ENCODE measurements at regions of chr9 and their contacts with region 1.

Region 1: GRCh38 chr9:123401879-123402513 is 46.0 kb downstream of the CRB2 start:
- DNase-seq: peak; percentile 66
- ATAC-seq: peak; percentile 77
- H3K4me3 Mint-ChIP-seq: no peak overlapping the region
- H3K27ac Mint-ChIP-seq: peak overlapping the region; percentile 30; the same call in 1 of the 2 replicates
- H3K4me1 Mint-ChIP-seq: peaks cover 9% of the 10 kb centered on the region
- H3K27me3 Mint-ChIP-seq: no peaks in the 10 kb centered on the region
- CTCF ChIP-seq: peak; percentile 56

Region 2: DNA sequence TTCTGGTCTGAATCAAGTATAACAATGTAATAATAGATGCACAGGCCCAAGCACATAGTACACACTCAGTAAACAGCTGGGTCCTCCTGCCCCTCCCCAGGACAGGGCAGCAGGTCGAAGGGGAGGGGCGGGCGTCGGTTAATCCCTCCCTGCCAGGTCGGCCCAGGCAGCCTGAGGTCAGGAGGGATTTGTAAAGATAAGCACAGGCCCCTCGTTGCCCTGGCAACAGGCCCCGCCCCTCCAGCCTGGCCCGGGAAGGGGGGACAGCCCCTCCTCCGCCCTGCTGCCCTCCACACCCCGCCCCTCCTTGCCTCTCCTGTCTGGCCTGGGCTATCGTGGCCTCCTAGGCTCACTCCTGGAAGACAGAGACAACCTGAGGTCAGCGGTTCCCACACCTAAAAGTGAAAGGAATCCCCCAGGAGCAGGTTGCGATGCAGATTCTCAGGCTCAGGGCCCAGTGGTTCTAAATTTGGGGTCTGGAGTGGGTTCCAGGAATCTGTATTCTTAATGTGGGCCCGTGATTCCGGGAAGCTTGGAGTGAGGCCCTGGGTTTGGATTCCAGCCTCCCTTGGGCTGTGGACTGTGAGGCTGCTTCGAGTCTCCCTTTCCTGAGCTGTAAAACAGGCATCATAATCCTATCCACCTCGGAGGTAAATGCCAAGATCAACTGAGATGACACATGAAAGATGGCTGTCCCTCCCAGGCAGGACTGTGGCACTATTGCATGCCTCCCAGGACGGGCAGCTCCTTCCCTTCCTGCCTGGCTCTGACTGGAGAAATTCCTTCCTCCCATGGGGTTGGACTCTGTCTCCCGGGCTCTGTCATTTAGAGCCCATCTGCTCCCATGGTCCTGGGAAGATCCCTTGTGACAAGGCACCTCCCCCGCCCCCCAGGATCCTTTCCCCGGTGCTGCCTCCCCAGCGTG is 41.6 kb before region 1 on chr9:
- CTCF ChIA-PET with region 1: interaction called, 13 read pairs
- POLR2A ChIA-PET with region 1: no interaction called
- DNase-seq: peak; percentile 98
- ATAC-seq: peak; percentile 78
- H3K4me3 Mint-ChIP-seq: 0 out of 2 replicates have a peak overlapping the region, but pooled peaks have one; percentile 24
- H3K27ac Mint-ChIP-seq: peak overlapping the region; percentile 3; the same call in 1 of the 2 replicates
- H3K4me1 Mint-ChIP-seq: peaks cover 58% of the 10 kb centered on the region
- H3K27me3 Mint-ChIP-seq: peaks cover 10% of the 10 kb centered on the region
- CTCF ChIP-seq: no peak

Region 3: DNA sequence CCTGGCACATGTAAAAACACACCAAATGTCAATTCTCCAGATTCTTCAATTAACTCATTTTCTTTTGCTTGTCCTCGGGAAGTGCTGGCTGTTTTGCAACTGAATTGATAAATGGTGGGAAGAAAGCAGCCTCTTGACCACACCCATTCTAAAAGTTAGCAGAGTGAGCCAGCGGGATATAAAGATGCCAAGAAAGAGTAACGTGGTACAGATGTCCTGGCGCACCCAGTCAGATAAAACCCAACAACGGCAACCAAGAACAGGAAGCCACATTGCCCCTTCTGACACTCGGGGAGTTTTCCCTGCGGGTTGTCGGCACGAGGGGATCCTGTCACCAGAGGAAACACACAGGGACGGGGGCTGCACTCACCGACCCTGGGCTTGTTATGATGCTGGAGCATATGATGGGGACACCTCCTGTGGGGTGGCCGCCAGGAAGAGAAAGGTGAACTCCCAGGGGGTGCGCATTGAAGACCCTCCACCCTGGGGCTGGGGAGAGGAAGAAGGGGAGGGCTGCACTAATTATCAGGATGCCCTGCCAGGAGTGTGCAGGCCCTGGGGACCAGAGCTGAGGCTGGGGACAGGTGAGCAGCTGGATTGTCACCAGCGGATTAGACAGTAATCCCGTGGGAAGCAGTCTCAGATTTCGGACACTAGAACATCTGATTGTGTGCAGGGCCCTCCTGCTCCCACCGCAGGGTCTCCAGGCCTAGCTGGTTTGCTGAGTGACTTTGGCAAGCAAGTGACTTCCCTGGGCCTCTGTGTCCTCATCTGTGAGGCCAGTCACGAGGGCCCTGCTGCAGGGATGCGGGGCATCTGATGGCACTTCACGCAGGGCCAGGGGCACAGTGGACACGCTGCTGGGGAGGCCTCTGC is 13.2 kb after region 1 on chr9:
- CTCF ChIA-PET with region 1: interaction called, 24 read pairs
- POLR2A ChIA-PET with region 1: no interaction called
- DNase-seq: no peak
- ATAC-seq: no peak
- H3K4me3 Mint-ChIP-seq: no peak overlapping the region
- H3K27ac Mint-ChIP-seq: peak overlapping the region; percentile 6; the same call in 1 of the 2 replicates
- H3K4me1 Mint-ChIP-seq: peaks cover 19% of the 10 kb centered on the region
- H3K27me3 Mint-ChIP-seq: no peaks in the 10 kb centered on the region
- CTCF ChIP-seq: no peak

Region 4: GRCh38 chr9:123438321-123438720 is 36.3 kb after region 1 on chr9:
- CTCF ChIA-PET with region 1: interaction called, 10 read pairs
- POLR2A ChIA-PET with region 1: no interaction called
- DNase-seq: no peak
- ATAC-seq: no peak
- H3K4me3 Mint-ChIP-seq: no peak overlapping the region
- H3K27ac Mint-ChIP-seq: no peak overlapping the region
- H3K4me1 Mint-ChIP-seq: peaks cover 23% of the 10 kb centered on the region
- H3K27me3 Mint-ChIP-seq: no peaks in the 10 kb centered on the region
- CTCF ChIP-seq: no peak

Region 5: DNA sequence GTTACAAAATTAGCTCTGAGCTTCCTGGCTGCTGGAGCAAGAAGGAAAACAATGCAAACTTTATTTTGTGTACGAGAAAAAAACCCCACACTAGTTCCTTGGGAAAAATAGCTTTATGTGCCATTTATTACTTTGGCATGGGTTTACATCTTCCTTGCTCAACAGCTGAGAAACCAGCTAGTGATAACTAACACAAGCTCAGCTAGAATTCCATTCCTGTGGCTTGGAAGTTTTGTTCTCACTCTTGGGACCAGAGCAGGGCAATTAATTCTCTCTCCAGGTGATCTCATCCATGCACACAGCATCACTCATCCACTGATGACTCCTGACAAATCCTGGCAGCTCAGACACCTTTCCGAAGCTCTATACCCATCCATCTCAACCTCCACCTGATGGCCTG is 58.1 kb after region 1 on chr9:
- CTCF ChIA-PET with region 1: interaction called, 12 read pairs
- POLR2A ChIA-PET with region 1: interaction called, 10 read pairs
- DNase-seq: no peak
- ATAC-seq: no peak
- H3K4me3 Mint-ChIP-seq: no peak overlapping the region
- H3K27ac Mint-ChIP-seq: no peak overlapping the region
- H3K4me1 Mint-ChIP-seq: no peaks in the 10 kb centered on the region
- H3K27me3 Mint-ChIP-seq: no peaks in the 10 kb centered on the region
- CTCF ChIP-seq: no peak

Measured in WTC11 (cell line).